Right ventricle myocardium superior (tissue), 1 donor: ENCODE measurements at regions of chr7 and their contacts with region 1.

Region 1: DNA sequence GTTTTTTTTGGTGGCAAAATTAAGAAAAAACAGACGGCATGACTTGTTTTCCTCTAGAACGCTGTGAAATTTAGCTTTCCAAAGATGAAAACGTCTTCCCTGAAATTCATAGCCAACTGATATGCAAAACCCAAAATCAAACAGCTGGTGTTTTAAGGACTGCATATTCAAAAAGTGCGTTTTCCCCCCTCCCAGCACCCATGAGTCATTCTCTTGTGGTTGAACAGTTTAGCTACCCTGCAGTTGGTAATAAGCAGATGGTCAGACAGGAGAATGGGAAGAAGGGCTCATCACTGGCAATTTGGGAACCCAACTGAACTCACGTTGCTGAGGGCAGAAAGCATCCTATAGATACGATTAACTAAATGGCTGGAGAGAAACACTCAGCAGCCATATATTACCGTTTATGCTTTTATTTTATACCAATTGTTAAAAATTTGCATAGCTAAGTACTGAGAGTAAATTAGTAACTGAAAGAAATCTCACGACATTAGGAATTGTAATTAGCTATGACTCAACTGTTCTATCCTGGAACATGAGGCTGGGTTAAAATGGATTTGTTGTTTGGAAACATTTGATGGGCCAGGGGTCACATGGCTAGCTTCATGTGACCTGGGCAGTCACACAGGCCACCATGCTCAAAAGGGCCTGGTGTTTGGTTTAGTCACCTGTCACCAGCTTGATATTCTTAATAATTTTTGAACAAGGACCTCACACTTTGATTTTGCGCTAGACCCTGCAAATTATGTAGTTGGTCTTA is 343.1 kb downstream of the PHTF2 start:
- DNase-seq: no peak
- ATAC-seq: no peak

Region 2: GRCh38 chr7:78184299-78184698 is 42.6 kb after region 1 on chr7:
- intact Hi-C with region 1: no loop called
- DNase-seq: no peak
- ATAC-seq: no peak

Region 3: GRCh38 chr7:78197447-78197846 is 55.7 kb after region 1 on chr7:
- intact Hi-C with region 1: loop called (anchors 10 kb)
- DNase-seq: no peak
- ATAC-seq: no peak